Transverse colon (tissue), 4 donors: ENCODE measurements at regions of chr11 and their contacts with region 1.

Region 1: DNA sequence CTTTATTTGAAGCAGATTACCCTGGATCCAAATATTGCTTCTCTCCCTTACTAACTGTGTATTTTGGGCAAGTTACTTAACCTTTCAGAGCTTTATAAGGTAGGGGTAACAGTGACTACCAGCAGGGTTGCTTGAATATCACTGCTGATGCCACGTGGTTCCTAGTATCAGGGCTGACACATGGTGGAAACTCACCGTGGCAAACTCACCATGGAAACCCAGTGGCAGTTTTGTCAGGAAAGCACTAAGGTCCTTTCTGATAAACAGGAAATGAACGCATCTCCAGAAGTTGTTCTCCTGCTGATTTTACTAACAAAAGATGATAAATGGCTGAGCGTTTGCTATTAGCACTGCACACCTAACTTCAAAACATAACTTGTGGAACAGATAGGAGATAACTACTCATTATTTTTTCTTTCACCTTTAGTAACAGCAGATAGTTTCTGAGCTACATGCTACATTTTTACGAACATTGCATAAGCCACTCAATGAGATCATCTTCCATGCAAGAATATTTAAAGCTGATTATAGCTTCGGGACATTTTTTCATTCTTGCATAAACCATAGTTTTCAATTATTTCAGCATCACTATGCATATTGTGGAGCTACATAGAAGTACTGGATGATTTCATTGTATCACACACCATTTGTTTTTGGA is 59.7 kb upstream of the RAG2 start:
- DNase-seq: no peak
- H3K4me3 ChIP-seq: no peak overlapping the region
- H3K27ac ChIP-seq: no peak overlapping the region
- H3K4me1 ChIP-seq: no peaks in the 10 kb centered on the region
- H3K27me3 ChIP-seq: no peaks in the 10 kb centered on the region
- CTCF ChIP-seq: no peak
- EP300 ChIP-seq: no peak
- POLR2A ChIP-seq: no peak

Region 2: DNA sequence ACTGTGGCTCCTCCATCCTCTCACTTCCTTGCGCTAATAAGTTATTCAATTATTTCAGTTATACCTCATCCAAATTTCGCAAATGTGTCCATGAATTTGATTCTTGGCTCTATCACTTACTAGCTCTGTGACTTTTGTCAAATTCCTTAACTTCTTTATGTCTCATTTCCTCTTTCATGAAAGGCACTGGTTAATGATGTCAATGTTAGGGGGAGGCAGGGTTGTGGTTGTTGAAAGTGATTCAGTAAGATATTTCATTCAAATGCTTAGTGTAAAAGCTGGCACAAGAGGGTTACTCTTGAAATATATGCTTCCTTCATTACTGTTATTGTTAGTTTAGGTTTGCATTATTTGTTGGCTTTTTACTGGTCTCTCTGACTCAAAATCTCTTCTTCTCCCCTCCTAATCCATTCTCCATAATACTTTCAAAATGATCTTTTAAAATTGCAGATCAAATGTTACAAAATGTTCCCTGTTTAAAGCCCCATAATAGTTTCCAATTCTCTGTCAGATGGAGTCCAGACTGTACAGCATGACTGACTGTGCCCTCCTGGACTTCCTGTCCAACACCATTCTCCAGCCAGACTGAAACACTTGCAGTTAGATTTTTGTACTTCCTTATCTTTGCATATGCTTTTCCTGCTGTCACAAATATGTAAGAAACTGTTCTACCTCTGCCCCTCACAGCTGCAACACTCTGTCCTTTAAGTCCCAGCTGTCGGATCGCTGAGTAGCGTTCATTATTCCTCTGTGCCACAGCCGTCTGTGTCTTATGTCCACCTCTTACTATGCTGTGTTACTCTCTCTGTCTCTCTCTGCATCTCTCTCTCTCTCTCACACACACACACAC is 450.9 kb after region 1 on chr11:
- in situ Hi-C with region 1: no loop called
- intact Hi-C with region 1: loop called (anchors 5 kb)
- DNase-seq: no peak
- H3K4me3 ChIP-seq: no peak overlapping the region
- H3K27ac ChIP-seq: no peak overlapping the region
- H3K4me1 ChIP-seq: no peaks in the 10 kb centered on the region
- H3K27me3 ChIP-seq: no peaks in the 10 kb centered on the region
- CTCF ChIP-seq: no peak
- EP300 ChIP-seq: no peak
- POLR2A ChIP-seq: no peak